ENCODE measurements at regions of chr15 and their contacts with region 1.

Region 1: GRCh38 chr15:48963524-48964113 is at the start of gene SHC4:
- DNase-seq: peak; percentile 93
- H3K4me3 ChIP-seq: peak within 1 kb of the TSS; percentile 48
- H3K27ac ChIP-seq: no peak within 1 kb of the TSS
- H3K4me1 ChIP-seq: peaks cover 4% of the 10 kb centered on the region
- H3K27me3 ChIP-seq: no peaks in the 10 kb centered on the region
- CTCF ChIP-seq: peak; percentile 56
- total RNA-seq, gene SHC4: 0.57 and 0.73 TPM in 2 replicates

Region 2: GRCh38 chr15:48868536-48868935 is 95.1 kb before region 1 on chr15:
- CTCF ChIA-PET with region 1: no interaction called
- POLR2A ChIA-PET with region 1: no interaction called
- intact Hi-C with region 1: loop called (anchors 5 kb)
- DNase-seq: peak; percentile 86
- H3K4me3 ChIP-seq: no peak overlapping the region
- H3K27ac ChIP-seq: no peak overlapping the region
- H3K4me1 ChIP-seq: peaks cover 43% of the 10 kb centered on the region
- H3K27me3 ChIP-seq: no peaks in the 10 kb centered on the region
- CTCF ChIP-seq: no peak

Measured in A673 (cell line).